Sciatic nerve (tissue), 2 donors: ENCODE measurements at regions of chr7 and their contacts with region 1.

Region 1: DNA sequence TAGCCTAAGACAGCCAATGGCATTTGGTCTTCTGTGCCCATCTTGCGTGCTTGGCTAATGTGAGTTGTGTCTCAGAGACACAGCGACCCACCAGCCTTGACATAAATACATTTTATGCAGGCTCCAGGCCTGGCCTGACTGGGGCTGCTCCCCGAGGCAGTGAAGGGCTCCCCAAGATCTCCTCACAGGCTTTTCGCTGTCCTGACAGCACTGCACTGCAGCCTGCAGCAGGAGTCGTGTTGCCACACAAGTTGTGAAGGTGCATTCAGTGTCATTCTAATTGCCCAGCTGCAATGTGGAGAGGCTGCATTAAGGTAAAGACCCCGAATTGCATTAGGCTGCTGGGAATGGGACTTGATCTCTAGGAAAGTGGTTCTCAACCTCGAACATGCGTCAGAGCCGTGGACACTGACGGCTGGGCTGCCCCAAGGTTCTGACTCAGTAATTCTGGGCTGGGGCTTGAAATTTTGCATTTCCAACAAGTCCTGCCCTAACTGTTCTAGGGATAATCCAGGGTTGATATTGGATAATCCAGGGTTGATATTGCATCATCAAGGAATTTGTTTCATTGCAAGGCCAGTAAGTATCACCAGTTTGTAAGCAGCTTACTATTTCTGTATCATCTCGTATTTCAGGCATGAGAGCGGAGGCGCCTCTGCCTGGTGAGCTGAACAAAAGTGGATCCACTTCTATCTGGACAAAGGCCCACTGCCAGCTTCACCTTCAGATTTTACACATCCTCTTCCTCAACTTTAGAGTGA is 108.7 kb upstream of the INSIG1 start:
- DNase-seq: no peak
- ATAC-seq: no peak

Region 2: GRCh38 chr7:155230168-155230593 is 41.2 kb after region 1 on chr7:
- intact Hi-C with region 1: no loop called
- DNase-seq: no peak
- ATAC-seq: no peak

Region 3: GRCh38 chr7:155338632-155339320 is 149.8 kb after region 1 on chr7:
- intact Hi-C with region 1: loop called (anchors 5 kb)
- DNase-seq: no peak
- ATAC-seq: no peak